CD4-positive, alpha-beta memory T cell (primary cell): ENCODE measurements at regions of chr17 and their contacts with region 1.

Region 1: GRCh38 chr17:8156246-8156992 is 4.2 kb upstream of the PER1 start:
- DNase-seq: peak; percentile 100
- H3K4me3 ChIP-seq: peak overlapping the region; percentile 90
- H3K4me3 Mint-ChIP-seq: no peak overlapping the region
- H3K27ac ChIP-seq: peak overlapping the region; percentile 100
- H3K27ac Mint-ChIP-seq: no peak overlapping the region
- H3K4me1 ChIP-seq: peaks cover 85% of the 10 kb centered on the region
- H3K4me1 Mint-ChIP-seq: peaks cover 38 to 71% (median 55%) of the 10 kb centered on the region in 4 donors
- H3K27me3 ChIP-seq: no peaks in the 10 kb centered on the region
- H3K27me3 Mint-ChIP-seq: no peaks in the 10 kb centered on the region

Region 2: GRCh38 chr17:8041249-8041928 is 115.0 kb before region 1 on chr17:
- CTCF ChIA-PET with region 1: no interaction called
- POLR2A ChIA-PET with region 1: no interaction called
- intact Hi-C with region 1: no loop called
- DNase-seq: peak; percentile 29 to 49 (median 35)
- H3K4me3 ChIP-seq: no peak overlapping the region
- H3K4me3 Mint-ChIP-seq: no peak overlapping the region
- H3K27ac ChIP-seq: no peak overlapping the region
- H3K27ac Mint-ChIP-seq: no peak overlapping the region
- H3K4me1 ChIP-seq: no peaks in the 10 kb centered on the region
- H3K4me1 Mint-ChIP-seq: peaks cover 0 to 4% (median 0%) of the 10 kb centered on the region in 4 donors
- H3K27me3 ChIP-seq: no peaks in the 10 kb centered on the region
- H3K27me3 Mint-ChIP-seq: peaks cover 15 to 16% of the 10 kb centered on the region in 2 donors

Region 3: GRCh38 chr17:8125157-8125946 is 31.1 kb before region 1 on chr17:
- CTCF ChIA-PET with region 1: interaction called, 38 read pairs
- POLR2A ChIA-PET with region 1: interaction called, 83 read pairs
- intact Hi-C with region 1: no loop called
- DNase-seq: peak; percentile 83 to 90 (median 87)
- H3K4me3 ChIP-seq: peak overlapping the region; percentile 53 to 68
- H3K4me3 Mint-ChIP-seq: peak overlapping the region; percentile 85 to 99 (median 92)
- H3K27ac ChIP-seq: no peak overlapping the region
- H3K27ac Mint-ChIP-seq: peak overlapping the region; percentile 69 to 100 (median 93)
- H3K4me1 ChIP-seq: peaks cover 63% of the 10 kb centered on the region
- H3K4me1 Mint-ChIP-seq: peaks cover 42 to 62% (median 51%) of the 10 kb centered on the region in 4 donors
- H3K27me3 ChIP-seq: peaks cover 20% of the 10 kb centered on the region
- H3K27me3 Mint-ChIP-seq: peaks cover 10 to 28% of the 10 kb centered on the region in 2 donors

Region 4: DNA sequence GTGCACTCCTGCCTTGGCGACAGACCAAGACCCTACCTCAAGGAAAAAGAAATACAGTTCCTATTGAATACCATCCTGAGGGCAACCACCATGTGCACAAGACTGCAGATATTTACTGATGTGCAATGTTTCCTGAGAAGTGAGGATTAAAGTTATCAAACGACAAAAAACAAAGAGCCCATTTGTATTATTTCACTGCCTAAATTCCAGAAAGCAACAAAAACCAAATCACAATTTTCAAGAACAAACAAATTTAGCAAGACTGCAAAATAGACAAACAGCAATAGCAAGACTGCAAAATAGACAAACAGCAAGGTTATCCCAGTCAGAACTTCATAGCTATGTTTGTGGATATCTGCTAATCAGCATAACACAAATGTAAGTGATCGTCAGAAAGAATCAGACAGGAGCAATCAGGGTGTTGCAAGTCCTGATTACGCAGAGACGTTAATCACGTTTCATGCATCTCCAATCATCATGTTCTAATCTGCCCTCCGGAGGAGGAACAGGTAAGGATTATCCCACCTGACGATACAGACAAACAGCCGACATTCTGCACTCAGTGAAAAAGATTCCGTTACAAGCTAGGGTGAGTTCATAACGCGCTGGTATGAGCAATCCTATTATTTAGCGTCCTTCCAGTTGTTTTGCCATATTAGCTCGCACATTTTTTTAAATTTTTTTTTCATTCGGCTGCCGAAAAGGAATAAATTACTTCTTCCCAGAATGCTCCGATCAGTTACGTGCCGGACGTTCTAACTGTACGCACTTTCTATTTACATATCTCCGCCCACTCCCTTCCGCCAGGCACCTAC is 16.8 kb after region 1 on chr17:
- CTCF ChIA-PET with region 1: interaction called, 11 read pairs
- POLR2A ChIA-PET with region 1: interaction called, 1,074 read pairs
- intact Hi-C with region 1: loop called (anchors 1 kb)
- DNase-seq: peak; percentile 91 to 94 (median 92)
- H3K4me3 ChIP-seq: peak overlapping the region; percentile 12 to 52
- H3K4me3 Mint-ChIP-seq: peak overlapping the region; percentile 84 to 94 (median 90)
- H3K27ac ChIP-seq: peak overlapping the region; percentile 99
- H3K27ac Mint-ChIP-seq: peak overlapping the region; percentile 98 to 100 (median 100)
- H3K4me1 ChIP-seq: peaks cover 45% of the 10 kb centered on the region
- H3K4me1 Mint-ChIP-seq: peaks cover 30 to 61% (median 43%) of the 10 kb centered on the region in 4 donors
- H3K27me3 ChIP-seq: no peaks in the 10 kb centered on the region
- H3K27me3 Mint-ChIP-seq: no peaks in the 10 kb centered on the region

Region 5: GRCh38 chr17:8209909-8210760 is 53.7 kb after region 1 on chr17 and contains the start of gene AURKB:
- CTCF ChIA-PET with region 1: interaction called, 3 read pairs
- POLR2A ChIA-PET with region 1: interaction called, 11 read pairs
- intact Hi-C with region 1: no loop called
- DNase-seq: peak; percentile 90 to 98 (median 90)
- H3K4me3 ChIP-seq: peak within 1 kb of the TSS; percentile 71 to 83
- H3K4me3 Mint-ChIP-seq: peak within 1 kb of the TSS; percentile 85 to 96 (median 92)
- H3K27ac ChIP-seq: peak within 1 kb of the TSS; percentile 69
- H3K27ac Mint-ChIP-seq: peak within 1 kb of the TSS; percentile 82 to 95 (median 94)
- H3K4me1 ChIP-seq: peaks cover 15% of the 10 kb centered on the region
- H3K4me1 Mint-ChIP-seq: peaks cover 13 to 21% (median 17%) of the 10 kb centered on the region in 4 donors
- H3K27me3 ChIP-seq: no peaks in the 10 kb centered on the region
- H3K27me3 Mint-ChIP-seq: no peaks in the 10 kb centered on the region
- total RNA-seq, gene AURKB: 0.67 to 0.83 TPM

Region 6: DNA sequence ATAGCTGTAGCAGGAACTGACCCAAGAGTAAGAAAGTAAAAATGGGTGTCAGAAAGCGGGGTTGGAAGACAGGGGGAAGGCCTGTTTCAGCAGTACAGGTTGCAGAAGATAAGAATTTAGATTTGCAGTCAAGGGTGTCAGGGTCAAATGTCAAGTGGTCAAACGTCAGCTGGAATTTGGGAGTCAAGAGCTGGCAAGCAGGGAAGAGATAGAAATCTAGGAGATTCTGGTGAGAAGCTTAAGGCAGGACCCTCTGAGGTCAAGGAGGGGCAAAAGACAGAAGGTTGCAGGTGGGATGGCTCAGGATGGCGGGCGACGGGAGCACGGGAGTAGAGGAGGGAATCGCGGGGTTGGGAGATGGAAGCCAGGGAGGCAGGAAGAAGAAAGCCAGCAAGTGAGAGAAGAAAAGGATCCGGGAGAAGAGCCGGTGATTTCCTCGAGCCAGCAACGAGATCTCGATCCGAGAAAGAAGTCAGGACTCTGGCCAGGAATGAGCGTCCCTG is 138.4 kb after region 1 on chr17:
- CTCF ChIA-PET with region 1: interaction called, 9 read pairs
- POLR2A ChIA-PET with region 1: interaction called, 23 read pairs
- intact Hi-C with region 1: loop called (anchors 1 kb)
- DNase-seq: no peak
- H3K4me3 ChIP-seq: peak overlapping the region; percentile 78 to 92
- H3K4me3 Mint-ChIP-seq: peak overlapping the region; percentile 91 to 97 (median 94)
- H3K27ac ChIP-seq: peak overlapping the region; percentile 73
- H3K27ac Mint-ChIP-seq: peak overlapping the region; percentile 92 to 98 (median 96)
- H3K4me1 ChIP-seq: peaks cover 26% of the 10 kb centered on the region
- H3K4me1 Mint-ChIP-seq: peaks cover 18 to 50% (median 29%) of the 10 kb centered on the region in 4 donors
- H3K27me3 ChIP-seq: no peaks in the 10 kb centered on the region
- H3K27me3 Mint-ChIP-seq: no peaks in the 10 kb centered on the region

Region 7: GRCh38 chr17:8300627-8301242 is 144.3 kb after region 1 on chr17:
- CTCF ChIA-PET with region 1: interaction called, 9 read pairs
- POLR2A ChIA-PET with region 1: interaction called, 23 read pairs
- intact Hi-C with region 1: loop called (anchors 1 kb)
- DNase-seq: peak; percentile 62 to 76 (median 72)
- H3K4me3 ChIP-seq: no peak overlapping the region
- H3K4me3 Mint-ChIP-seq: peak overlapping the region in 2 of 8 donors; percentile 2
- H3K27ac ChIP-seq: no peak overlapping the region
- H3K27ac Mint-ChIP-seq: peak overlapping the region in 6 of 7 donors; percentile 47 to 90 (median 83)
- H3K4me1 ChIP-seq: peaks cover 7% of the 10 kb centered on the region
- H3K4me1 Mint-ChIP-seq: peaks cover 7 to 16% (median 11%) of the 10 kb centered on the region in 4 donors
- H3K27me3 ChIP-seq: no peaks in the 10 kb centered on the region
- H3K27me3 Mint-ChIP-seq: peaks cover 0 to 1% of the 10 kb centered on the region in 2 donors